ENCODE measurements at regions of chr5 and their contacts with region 1.

Region 1: DNA sequence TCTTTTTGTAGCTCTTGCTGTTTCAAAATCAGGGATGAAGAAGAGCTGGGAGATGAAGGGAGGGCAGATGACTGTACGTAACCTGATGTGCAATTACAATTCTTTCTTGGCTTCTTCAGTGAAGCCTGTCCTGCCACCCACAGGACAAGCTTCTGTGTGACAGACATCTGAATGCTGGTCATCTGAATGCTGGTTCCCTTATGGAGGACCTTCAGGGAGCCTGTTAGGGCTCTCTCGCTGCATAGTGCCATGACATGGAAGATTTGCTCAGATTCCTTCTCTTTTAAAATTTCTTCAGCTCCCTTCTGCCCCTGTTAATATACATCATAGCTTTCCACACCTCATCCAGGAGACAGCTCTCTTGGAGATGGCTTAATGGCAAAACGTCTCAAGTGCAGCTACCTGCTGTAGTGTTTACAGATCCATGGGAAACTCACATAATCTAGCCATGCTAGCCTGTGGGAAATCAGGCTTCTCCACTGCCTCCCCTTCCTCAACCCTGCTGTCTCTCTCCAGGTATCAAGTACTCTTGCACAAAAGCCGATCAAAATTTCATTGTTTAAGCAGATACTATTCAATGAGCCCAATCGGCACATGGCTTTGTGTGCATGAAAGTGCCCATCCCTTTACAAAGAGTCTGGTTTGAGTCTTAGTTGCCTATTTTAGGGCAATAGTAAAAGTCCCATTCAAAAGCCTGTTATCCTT is 134.6 kb downstream of the RAB3C start:
- DNase-seq: no peak
- ATAC-seq: no peak

Region 2: GRCh38 chr5:58498340-58498942 is 219.0 kb before region 1 on chr5:
- intact Hi-C with region 1: loop called in 1 of 2 experiments (anchors 5 kb)
- DNase-seq: peak; percentile 30
- ATAC-seq: peak in 1 of 2 donors; percentile 41

Region 3: DNA sequence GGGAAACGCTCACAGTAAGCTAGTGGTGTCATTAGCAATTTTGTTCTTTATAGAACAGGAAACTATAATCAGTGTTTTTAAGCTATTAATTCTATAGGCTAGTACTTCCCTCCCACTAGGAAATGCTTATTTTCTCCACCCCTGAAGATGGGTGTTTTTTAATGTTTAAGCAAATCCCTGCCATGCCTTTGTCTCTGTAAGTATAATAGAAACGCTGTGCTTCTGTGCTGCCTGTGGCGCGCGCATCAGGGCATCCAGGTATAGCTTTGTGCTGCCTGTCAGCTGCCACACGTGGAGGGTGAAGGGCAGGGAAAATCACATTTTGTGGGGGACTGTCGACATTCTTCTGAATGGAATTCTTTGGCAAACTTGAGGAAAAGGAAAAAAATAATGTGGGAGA is 82.9 kb after region 1 on chr5:
- intact Hi-C with region 1: no loop called
- DNase-seq: no peak
- ATAC-seq: no peak

Measured in left cardiac atrium (tissue), 4 donors.